Naive thymus-derived CD4-positive, alpha-beta T cell (primary cell): ENCODE measurements at regions of chr12 and their contacts with region 1.

Region 1: DNA sequence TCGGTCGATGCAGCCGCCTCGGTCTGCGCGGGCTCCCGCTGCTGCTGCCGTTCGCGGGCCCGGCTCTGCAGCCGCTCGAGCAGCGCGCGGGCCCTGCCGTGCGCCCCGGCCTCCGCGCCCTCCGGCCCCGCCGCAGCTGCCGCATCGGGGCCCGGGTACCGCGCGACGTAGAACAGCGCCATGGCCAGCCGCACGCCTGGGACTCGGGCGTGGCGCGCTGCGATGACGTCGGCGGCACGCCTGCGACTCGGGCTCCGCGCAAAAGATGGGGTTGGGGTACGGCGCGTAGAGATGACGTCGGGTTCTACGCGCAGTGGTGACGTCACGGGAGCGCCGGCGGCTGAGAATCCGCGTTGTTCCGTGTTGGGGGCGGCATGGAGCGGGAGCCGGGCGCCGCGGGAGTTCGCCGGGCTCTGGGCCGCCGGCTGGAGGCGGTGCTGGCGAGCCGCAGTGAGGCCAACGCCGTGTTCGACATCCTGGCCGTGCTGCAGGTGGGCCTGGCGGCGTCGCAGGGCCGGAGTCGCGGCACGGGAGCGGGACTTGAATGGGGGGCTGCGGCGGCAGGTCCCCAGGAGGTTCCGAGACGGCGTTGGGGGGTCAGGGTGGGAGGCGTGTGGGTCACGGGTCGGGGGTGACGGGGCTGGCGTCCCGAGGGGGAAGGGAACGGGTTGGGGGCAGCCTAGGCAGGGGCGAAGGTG is at the starts of genes DDX51 and NOC4L:
- DNase-seq: peak; percentile 93 to 99 (median 96)
- ATAC-seq: peak; percentile 98
- H3K4me3 ChIP-seq: peak within 1 kb of the TSS; percentile 80
- H3K4me3 Mint-ChIP-seq: peak within 1 kb of the TSS; percentile 85 to 97 (median 90)
- H3K27ac ChIP-seq: peak within 1 kb of the TSS; percentile 92
- H3K27ac Mint-ChIP-seq: peak within 1 kb of the TSS; percentile 83 to 99 (median 96)
- H3K4me1 ChIP-seq: peaks cover 21 to 23% of the 10 kb centered on the region in 2 donors
- H3K4me1 Mint-ChIP-seq: peaks cover 21 to 38% (median 29%) of the 10 kb centered on the region in 7 donors
- H3K27me3 ChIP-seq: no peaks in the 10 kb centered on the region
- H3K27me3 Mint-ChIP-seq: peaks cover 0 to 2% (median 0%) of the 10 kb centered on the region in 5 donors
- total RNA-seq, gene DDX51: 33.2 to 54.8 (median 50.6) TPM
- total RNA-seq, gene NOC4L: 19.3 to 27.1 (median 21.1) TPM

Region 2: DNA sequence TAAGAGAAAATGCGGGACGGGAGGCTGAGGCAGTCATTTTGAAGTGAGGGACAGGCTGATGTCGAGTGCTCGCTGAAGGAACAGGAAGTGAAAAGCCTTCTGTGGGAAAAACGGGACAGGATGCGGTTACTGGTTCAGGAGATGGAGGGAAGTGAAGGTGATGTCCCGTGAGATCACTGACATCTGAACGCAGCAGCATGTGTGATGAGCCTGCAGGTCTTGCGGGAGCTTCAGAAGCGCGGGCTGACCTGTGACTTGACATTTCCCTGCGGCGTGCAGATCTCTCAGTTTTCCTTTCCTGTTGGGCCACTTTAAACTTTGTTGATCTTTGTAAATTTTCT is 77.9 kb before region 1 on chr12:
- CTCF ChIA-PET with region 1: no interaction called
- POLR2A ChIA-PET with region 1: no interaction called
- intact Hi-C with region 1: loop called in 1 of 2 experiments (anchors 5 kb)
- DNase-seq: peak in 8 of 9 donors; percentile 23 to 43 (median 34)
- ATAC-seq: peak; percentile 45
- H3K4me3 ChIP-seq: peak overlapping the region; percentile 5
- H3K4me3 Mint-ChIP-seq: peak overlapping the region; percentile 78 to 94 (median 86)
- H3K27ac ChIP-seq: no peak overlapping the region
- H3K27ac Mint-ChIP-seq: peak overlapping the region; percentile 71 to 93 (median 91)
- H3K4me1 ChIP-seq: peaks cover 15 to 16% of the 10 kb centered on the region in 2 donors
- H3K4me1 Mint-ChIP-seq: peaks cover 12 to 32% (median 22%) of the 10 kb centered on the region in 7 donors
- H3K27me3 ChIP-seq: no peaks in the 10 kb centered on the region
- H3K27me3 Mint-ChIP-seq: no peaks in the 10 kb centered on the region

Region 3: GRCh38 chr12:132095520-132096384 is 48.5 kb before region 1 on chr12:
- CTCF ChIA-PET with region 1: no interaction called
- POLR2A ChIA-PET with region 1: no interaction called
- intact Hi-C with region 1: loop called in 1 of 2 experiments (anchors 5 kb)
- DNase-seq: peak in 7 of 9 donors; percentile 8 to 48 (median 21)
- ATAC-seq: no peak
- H3K4me3 ChIP-seq: no peak overlapping the region
- H3K4me3 Mint-ChIP-seq: peak overlapping the region in 9 of 10 donors; percentile 39 to 85 (median 65)
- H3K27ac ChIP-seq: peak overlapping the region; percentile 39
- H3K27ac Mint-ChIP-seq: peak overlapping the region; percentile 87 to 98 (median 94)
- H3K4me1 ChIP-seq: peaks cover 0 to 11% of the 10 kb centered on the region in 2 donors
- H3K4me1 Mint-ChIP-seq: peaks cover 11 to 35% (median 28%) of the 10 kb centered on the region in 7 donors
- H3K27me3 ChIP-seq: no peaks in the 10 kb centered on the region
- H3K27me3 Mint-ChIP-seq: no peaks in the 10 kb centered on the region

Region 4: GRCh38 chr12:132214891-132215290 is 70.6 kb after region 1 on chr12:
- CTCF ChIA-PET with region 1: no interaction called
- POLR2A ChIA-PET with region 1: no interaction called
- intact Hi-C with region 1: no loop called
- DNase-seq: no peak
- ATAC-seq: no peak
- H3K4me3 ChIP-seq: no peak overlapping the region
- H3K4me3 Mint-ChIP-seq: peak overlapping the region in 1 of 10 donors; percentile 12
- H3K27ac ChIP-seq: no peak overlapping the region
- H3K27ac Mint-ChIP-seq: no peak overlapping the region
- H3K4me1 ChIP-seq: peaks cover 0 to 3% of the 10 kb centered on the region in 2 donors
- H3K4me1 Mint-ChIP-seq: peaks cover 0 to 6% (median 5%) of the 10 kb centered on the region in 7 donors
- H3K27me3 ChIP-seq: no peaks in the 10 kb centered on the region
- H3K27me3 Mint-ChIP-seq: peaks cover 0 to 9% (median 4%) of the 10 kb centered on the region in 5 donors